ENCODE measurements at regions of chr10 and their contacts with region 1.

Region 1: DNA sequence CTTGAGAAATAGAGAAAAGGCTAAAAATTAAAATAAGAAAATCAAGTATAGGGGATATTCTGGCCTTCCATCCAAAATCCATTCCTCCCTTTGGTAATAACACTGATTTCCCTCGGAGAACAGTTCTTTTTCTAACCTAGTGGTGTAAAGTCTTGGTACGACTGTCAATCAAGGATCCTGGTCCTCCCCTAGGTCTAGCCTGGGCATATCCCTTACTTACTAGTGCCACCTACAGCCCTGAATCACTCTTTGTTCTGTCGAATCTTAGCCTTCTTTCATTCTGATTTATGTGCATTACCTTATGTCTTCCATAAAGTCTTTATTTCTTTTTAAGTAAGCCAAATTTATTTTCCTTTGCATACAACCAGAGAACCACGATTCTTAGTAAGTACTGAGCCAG is 298.7 kb upstream of the LRRTM3 start:
- DNase-seq: peak in 1 of 2 experiments; percentile 59
- H3K4me3 ChIP-seq: no peak overlapping the region
- H3K4me3 Mint-ChIP-seq: no peak overlapping the region
- H3K27ac Mint-ChIP-seq: no peak overlapping the region
- H3K4me1 ChIP-seq: no peaks in the 10 kb centered on the region
- H3K4me1 Mint-ChIP-seq: no peaks in the 10 kb centered on the region
- H3K27me3 ChIP-seq: no peaks in the 10 kb centered on the region
- H3K27me3 Mint-ChIP-seq: peaks cover 4% of the 10 kb centered on the region
- CTCF ChIP-seq: peak; percentile 34 to 40

Region 2: DNA sequence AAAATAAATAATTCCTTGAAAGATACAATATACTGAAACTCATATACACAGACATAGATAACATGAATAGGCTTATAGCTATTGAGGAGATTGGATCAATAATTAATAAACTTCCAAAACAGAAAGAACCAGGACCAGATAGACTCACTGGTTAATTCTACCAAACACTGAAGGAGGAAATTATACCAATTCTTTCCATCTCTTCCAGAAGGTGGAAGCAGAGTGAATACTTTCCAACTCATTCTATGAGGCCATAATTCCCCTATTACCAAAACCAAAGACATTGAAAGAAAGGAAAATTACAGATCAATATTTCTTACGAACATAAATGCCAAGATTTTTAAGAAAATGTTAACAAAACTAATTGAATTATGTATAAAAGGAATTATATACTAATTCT is 326.1 kb before region 1 on chr10:
- CTCF ChIA-PET with region 1: no interaction called
- POLR2A ChIA-PET with region 1: no interaction called
- intact Hi-C with region 1: loop called (anchors 2 kb)
- DNase-seq: no peak
- H3K4me3 ChIP-seq: no peak overlapping the region
- H3K4me3 Mint-ChIP-seq: no peak overlapping the region
- H3K27ac Mint-ChIP-seq: no peak overlapping the region
- H3K4me1 ChIP-seq: no peaks in the 10 kb centered on the region
- H3K4me1 Mint-ChIP-seq: peaks cover 5% of the 10 kb centered on the region
- H3K27me3 ChIP-seq: no peaks in the 10 kb centered on the region
- H3K27me3 Mint-ChIP-seq: no peaks in the 10 kb centered on the region
- CTCF ChIP-seq: no peak

Region 3: DNA sequence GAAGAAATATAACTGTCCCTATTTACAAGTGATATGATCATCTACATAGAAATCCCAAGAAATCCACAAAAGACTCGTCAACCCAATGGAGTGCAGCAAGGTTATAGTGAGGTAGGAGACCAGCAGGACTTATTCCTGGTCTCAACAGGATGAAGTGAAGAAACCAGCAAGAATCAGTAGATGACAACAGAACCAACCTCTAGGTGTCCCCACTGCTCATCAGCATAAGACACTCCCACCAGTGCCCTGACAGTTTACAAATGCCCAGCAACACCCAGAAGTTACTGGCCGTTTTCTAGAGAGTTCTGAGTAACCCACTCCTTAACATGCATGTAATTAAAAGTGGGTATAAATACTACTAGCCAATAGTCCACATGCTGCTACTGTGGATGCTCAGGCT is 171.9 kb before region 1 on chr10:
- CTCF ChIA-PET with region 1: no interaction called
- POLR2A ChIA-PET with region 1: no interaction called
- intact Hi-C with region 1: loop called (anchors 2 kb)
- DNase-seq: peak in 1 of 2 experiments; percentile 29
- H3K4me3 ChIP-seq: no peak overlapping the region
- H3K4me3 Mint-ChIP-seq: no peak overlapping the region
- H3K27ac Mint-ChIP-seq: no peak overlapping the region
- H3K4me1 ChIP-seq: no peaks in the 10 kb centered on the region
- H3K4me1 Mint-ChIP-seq: no peaks in the 10 kb centered on the region
- H3K27me3 ChIP-seq: no peaks in the 10 kb centered on the region
- H3K27me3 Mint-ChIP-seq: no peaks in the 10 kb centered on the region
- CTCF ChIP-seq: peak; percentile 29 to 35

Region 4: GRCh38 chr10:66521481-66521880 is 105.7 kb before region 1 on chr10:
- CTCF ChIA-PET with region 1: no interaction called
- POLR2A ChIA-PET with region 1: no interaction called
- intact Hi-C with region 1: loop called (anchors 1 kb)
- DNase-seq: no peak
- H3K4me3 ChIP-seq: no peak overlapping the region
- H3K4me3 Mint-ChIP-seq: no peak overlapping the region
- H3K27ac Mint-ChIP-seq: no peak overlapping the region
- H3K4me1 ChIP-seq: no peaks in the 10 kb centered on the region
- H3K4me1 Mint-ChIP-seq: no peaks in the 10 kb centered on the region
- H3K27me3 ChIP-seq: no peaks in the 10 kb centered on the region
- H3K27me3 Mint-ChIP-seq: no peaks in the 10 kb centered on the region
- CTCF ChIP-seq: no peak

Region 5: GRCh38 chr10:66639371-66639770 is 12.2 kb after region 1 on chr10:
- CTCF ChIA-PET with region 1: no interaction called
- POLR2A ChIA-PET with region 1: no interaction called
- intact Hi-C with region 1: no loop called
- DNase-seq: no peak
- H3K4me3 ChIP-seq: no peak overlapping the region
- H3K4me3 Mint-ChIP-seq: no peak overlapping the region
- H3K27ac Mint-ChIP-seq: no peak overlapping the region
- H3K4me1 ChIP-seq: no peaks in the 10 kb centered on the region
- H3K4me1 Mint-ChIP-seq: no peaks in the 10 kb centered on the region
- H3K27me3 ChIP-seq: no peaks in the 10 kb centered on the region
- H3K27me3 Mint-ChIP-seq: peaks cover 3% of the 10 kb centered on the region
- CTCF ChIP-seq: no peak